ENCODE measurements at regions of chr17 and their contacts with region 1.

Region 1: DNA sequence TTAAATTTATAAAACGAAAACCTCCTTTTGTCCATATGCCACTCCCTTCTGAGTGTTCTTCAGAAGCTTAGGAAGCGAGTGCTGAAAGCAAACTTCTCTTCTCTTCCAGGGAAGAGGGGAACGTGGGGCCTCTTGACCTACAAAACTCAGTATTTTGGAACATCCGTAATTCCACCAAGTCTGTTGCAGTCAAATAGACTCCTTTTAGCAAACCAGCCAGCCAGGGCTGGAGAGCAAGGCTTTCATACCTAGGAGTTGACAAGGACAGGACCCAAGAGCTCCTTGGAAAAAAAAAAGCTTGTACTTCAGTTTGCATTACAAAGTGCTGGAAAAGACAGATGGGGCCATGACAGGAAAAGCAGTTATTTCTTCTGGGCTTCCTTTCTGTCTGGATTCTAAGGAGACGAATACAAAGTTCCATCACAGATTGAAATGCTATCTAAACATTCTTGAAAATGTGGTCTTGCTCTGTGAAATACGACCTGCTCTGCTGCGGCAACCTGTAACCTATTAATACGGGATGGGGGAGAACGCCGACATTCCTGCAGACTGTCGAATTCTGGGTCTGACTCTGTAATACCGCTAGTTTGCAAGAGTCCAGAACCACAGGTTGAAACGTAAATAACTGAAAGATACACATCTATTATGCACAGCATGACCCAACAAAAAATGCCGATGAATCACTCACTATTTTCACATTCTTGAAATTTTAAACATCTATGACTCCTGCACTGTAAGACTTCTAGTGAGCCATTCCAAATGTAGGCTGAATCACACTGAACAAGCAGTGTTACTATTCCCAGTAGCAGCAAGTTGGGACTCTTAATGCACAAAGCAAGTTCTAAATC is 20.6 kb downstream of the VPS53 start:
- DNase-seq: peak; percentile 98
- H3K4me3 ChIP-seq: no peak overlapping the region
- CTCF ChIP-seq: no peak

Region 2: GRCh38 chr17:350706-351448 is 343.1 kb before region 1 on chr17:
- in situ Hi-C with region 1: no loop called
- DNase-seq: no peak
- H3K4me3 ChIP-seq: no peak overlapping the region
- CTCF ChIP-seq: no peak

Region 3: DNA sequence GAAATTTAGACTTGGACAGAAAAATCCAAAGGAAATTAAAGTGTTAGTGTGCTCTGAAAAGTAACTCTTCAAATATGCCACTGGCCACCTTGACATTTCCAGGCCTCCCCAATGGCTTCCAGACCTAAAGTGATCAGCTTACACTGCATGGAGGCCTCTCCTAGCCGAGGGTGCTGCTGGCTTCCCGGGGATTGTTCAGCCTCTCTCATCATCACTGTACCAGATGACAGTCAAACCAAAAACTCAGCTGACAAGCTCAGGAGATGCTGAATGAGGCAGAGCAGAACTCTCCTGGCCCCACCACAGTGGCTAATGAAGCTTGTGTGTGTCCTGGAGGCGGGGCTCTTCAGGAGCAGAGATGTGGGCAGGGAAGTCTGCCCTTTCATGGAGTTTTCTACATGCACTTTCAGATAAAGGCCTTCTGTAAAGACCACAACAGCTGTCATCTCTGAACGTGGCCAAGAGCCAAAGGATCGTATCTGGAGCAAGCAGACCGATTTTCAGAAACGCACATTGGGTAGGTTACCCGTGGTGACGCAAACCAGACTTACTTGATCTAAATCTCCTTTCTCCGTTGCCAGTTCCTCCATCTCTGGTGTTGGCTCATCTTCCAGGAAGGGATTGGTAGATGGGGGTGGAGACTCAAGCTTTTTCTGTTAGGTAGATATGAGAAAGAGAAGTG is 92.6 kb before region 1 on chr17:
- in situ Hi-C with region 1: loop called (anchors 5 kb)
- DNase-seq: no peak
- H3K4me3 ChIP-seq: no peak overlapping the region
- CTCF ChIP-seq: no peak

Region 4: GRCh38 chr17:652314-652713 is 41.7 kb before region 1 on chr17:
- in situ Hi-C with region 1: loop called (anchors 5 kb)
- DNase-seq: peak; percentile 53
- H3K4me3 ChIP-seq: no peak overlapping the region
- CTCF ChIP-seq: no peak

Region 5: GRCh38 chr17:740240-741017 is 46.4 kb after region 1 on chr17:
- in situ Hi-C with region 1: no loop called
- DNase-seq: no peak
- H3K4me3 ChIP-seq: no peak overlapping the region
- CTCF ChIP-seq: no peak

Region 6: GRCh38 chr17:801660-802059 is 107.6 kb after region 1 on chr17:
- in situ Hi-C with region 1: no loop called
- DNase-seq: peak; percentile 19
- H3K4me3 ChIP-seq: no peak overlapping the region
- CTCF ChIP-seq: no peak

Measured in astrocyte of the cerebellum (primary cell).